Right ventricle myocardium inferior (tissue), 1 donor: ENCODE measurements at regions of chr17 and their contacts with region 1.

Region 1: GRCh38 chr17:44556832-44557606 is at the start of gene FZD2:
- DNase-seq: peak; percentile 89
- ATAC-seq: peak; percentile 95
- total RNA-seq, gene FZD2: 3.4 TPM

Region 2: DNA sequence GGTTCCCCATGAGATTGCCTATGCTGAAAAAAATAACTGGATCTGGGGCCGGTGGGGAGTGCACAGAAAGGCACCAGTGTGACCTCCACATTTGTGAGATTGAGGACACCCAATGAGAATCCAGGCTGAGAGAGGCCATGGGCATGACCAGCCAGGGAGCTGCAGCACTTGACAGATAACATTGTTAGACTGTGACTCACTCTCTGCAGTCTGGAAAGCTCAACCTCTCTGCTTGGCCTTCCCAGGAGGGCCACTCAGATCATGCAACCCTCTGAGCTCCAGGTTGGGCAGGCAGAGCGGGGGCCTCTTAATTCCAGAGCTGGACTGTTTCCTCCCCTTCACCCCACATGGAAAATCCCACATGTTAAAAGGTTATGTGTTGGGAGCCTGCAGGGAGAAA is 30.3 kb after region 1 on chr17:
- intact Hi-C with region 1: loop called (anchors 2 kb)
- DNase-seq: no peak
- ATAC-seq: peak; percentile 95